ENCODE measurements at regions of chr4 and their contacts with region 1.

Region 1: DNA sequence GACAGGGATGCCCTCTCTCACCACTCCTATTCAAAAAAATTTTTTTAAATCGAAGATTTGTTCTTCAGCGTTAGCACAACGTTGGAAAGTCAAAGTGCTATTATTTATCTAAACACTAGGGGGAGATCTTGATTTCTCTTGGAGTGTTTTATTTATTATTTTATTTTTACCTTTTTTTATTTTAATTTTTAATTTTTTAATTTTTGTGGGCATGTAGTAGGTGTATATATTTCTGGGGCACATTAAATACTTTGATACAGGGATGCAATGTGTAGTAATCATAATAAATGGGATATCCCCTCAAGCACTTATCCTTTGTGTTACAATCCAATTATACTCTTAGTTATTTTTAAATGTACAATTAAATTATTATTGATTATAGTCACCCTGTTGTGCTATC is 37.4 kb upstream of the SLC10A4 start:
- DNase-seq: no peak
- H3K4me3 Mint-ChIP-seq: no peak overlapping the region
- H3K27ac Mint-ChIP-seq: no peak overlapping the region
- H3K4me1 Mint-ChIP-seq: no peaks in the 10 kb centered on the region
- H3K27me3 Mint-ChIP-seq: peaks cover 6% of the 10 kb centered on the region

Region 2: GRCh38 chr4:48546336-48546735 is 100.6 kb after region 1 on chr4:
- intact Hi-C with region 1: loop called (anchors 1 kb)
- DNase-seq: no peak
- H3K4me3 Mint-ChIP-seq: no peak overlapping the region
- H3K27ac Mint-ChIP-seq: no peak overlapping the region
- H3K4me1 Mint-ChIP-seq: peaks cover 5% of the 10 kb centered on the region
- H3K27me3 Mint-ChIP-seq: no peaks in the 10 kb centered on the region